GM12878 (cell line): ENCODE measurements at regions of chr5 and their contacts with region 1.

Region 1: DNA sequence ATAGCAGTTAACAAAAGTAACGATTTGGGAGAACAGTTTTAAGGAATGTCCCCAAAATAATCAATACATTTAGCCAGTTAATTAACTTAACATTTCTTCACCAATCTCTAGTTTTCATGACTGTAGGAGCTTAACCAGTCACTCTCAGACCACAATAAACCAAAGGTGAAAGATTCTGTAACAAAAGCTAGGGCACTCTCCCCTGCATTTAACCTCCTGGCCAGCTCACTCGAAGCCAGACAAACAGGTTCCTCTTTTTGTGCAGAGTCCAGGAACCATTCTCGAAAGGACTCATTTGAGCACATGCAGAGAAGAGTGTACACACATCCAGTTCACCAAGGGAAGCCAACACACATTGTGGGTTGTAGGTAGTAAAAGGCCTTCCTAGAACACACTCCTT is 6.5 kb downstream of the IL7R start:
- DNase-seq: no peak
- ATAC-seq: peak; percentile 87
- H3K4me3 ChIP-seq: no peak overlapping the region
- H3K27ac ChIP-seq: no peak overlapping the region
- H3K4me1 ChIP-seq: peaks cover 5% of the 10 kb centered on the region
- H3K27me3 ChIP-seq: no peaks in the 10 kb centered on the region
- CTCF ChIP-seq: no peak
- EP300 ChIP-seq: no peak
- POLR2A ChIP-seq: no peak
- RAD21 ChIP-seq: no peak

Region 2: DNA sequence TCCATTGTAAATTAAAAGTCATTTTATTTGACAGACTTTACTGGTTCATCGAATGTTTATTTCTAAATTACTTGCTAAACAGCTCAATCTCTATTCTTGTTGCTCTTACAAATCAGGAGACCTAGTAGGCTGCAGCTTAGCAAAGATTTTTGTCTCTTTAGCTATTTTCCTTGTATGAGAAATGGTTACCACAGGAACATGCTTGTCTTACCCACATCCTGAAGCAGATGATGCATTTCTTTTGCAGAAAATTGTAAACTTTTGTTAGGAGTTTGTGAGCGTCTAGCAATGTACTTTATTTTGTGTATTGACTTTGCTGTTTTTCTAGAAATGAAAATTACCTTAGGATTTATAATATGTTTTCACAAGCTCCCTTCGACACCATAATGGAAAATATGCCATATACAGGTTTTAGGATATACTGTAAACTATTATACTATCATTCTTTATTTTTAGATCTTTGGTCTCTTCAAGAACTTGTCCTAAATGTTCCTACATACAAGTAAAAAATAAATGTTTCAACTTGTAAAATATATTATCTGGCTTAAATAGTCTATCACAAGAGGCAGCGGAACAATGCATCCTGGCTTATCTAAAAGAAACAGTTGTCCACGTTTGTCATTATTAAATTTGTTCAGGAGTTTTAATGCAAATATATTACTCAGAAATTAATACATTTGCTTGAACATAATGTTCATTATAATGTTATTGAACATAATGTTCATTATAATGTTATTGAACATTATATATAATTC is 191.4 kb before region 1 on chr5:
- CTCF ChIA-PET with region 1: no interaction called
- POLR2A ChIA-PET with region 1: no interaction called
- RAD21 ChIA-PET with region 1: no interaction called
- SMC1A ChIA-PET with region 1: no interaction called
- in situ Hi-C with region 1: no loop called
- intact Hi-C with region 1: loop called (anchors 2 kb)
- DNase-seq: no peak
- ATAC-seq: no peak
- H3K4me3 ChIP-seq: no peak overlapping the region
- H3K27ac ChIP-seq: no peak overlapping the region
- H3K4me1 ChIP-seq: no peaks in the 10 kb centered on the region
- H3K27me3 ChIP-seq: no peaks in the 10 kb centered on the region
- CTCF ChIP-seq: no peak
- EP300 ChIP-seq: no peak
- POLR2A ChIP-seq: no peak
- RAD21 ChIP-seq: no peak

Region 3: DNA sequence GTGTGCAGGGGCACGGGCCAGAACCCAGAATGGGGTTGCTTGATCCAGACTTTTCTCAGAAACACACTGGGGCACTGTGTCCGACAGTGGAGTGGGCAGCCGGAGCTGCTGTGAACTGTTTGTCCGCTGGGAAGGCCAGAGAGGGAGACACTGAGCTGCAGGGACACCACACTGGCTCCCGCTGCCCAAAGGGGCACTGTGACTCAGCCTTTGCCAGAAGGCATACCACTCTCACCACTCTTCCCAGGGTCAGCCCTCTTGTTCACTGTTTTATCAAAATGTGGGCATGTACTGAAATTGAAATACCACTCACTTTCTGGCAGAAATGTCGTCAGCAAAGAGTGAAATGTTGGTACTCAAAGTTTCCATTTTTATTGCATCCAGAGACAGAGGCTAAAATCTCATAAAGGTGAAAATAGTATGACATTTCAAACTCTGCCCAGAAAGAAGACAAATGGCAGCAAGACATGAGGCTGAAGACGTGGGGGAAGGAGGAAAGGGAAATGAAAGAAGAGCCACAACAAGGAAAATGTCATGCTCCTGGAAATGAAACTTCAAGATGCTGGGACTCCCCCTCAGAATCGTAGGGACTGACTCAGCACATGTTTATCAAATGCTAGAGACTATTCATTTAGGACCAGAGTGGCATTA is 10.9 kb before region 1 on chr5:
- CTCF ChIA-PET with region 1: interaction called, 6 read pairs
- POLR2A ChIA-PET with region 1: interaction called, 6 read pairs
- RAD21 ChIA-PET with region 1: interaction called, 6 read pairs
- SMC1A ChIA-PET with region 1: interaction called, 14 read pairs
- in situ Hi-C with region 1: no loop called
- intact Hi-C with region 1: no loop called
- DNase-seq: peak; percentile 26
- ATAC-seq: peak; percentile 65
- H3K4me3 ChIP-seq: no peak overlapping the region
- H3K27ac ChIP-seq: no peak overlapping the region
- H3K4me1 ChIP-seq: peaks cover 18% of the 10 kb centered on the region
- H3K27me3 ChIP-seq: no peaks in the 10 kb centered on the region
- CTCF ChIP-seq: peak in 2 of 3 experiments; percentile 3 to 23; a peak in 1 of 6 replicates
- EP300 ChIP-seq: peak; percentile 31 to 41; a peak in 1 of 4 replicates
- POLR2A ChIP-seq: no peak
- RAD21 ChIP-seq: no peak

Region 4: GRCh38 chr5:35876921-35877320 is 13.8 kb after region 1 on chr5:
- CTCF ChIA-PET with region 1: interaction called, 12 read pairs
- POLR2A ChIA-PET with region 1: interaction called, 9 read pairs
- RAD21 ChIA-PET with region 1: interaction called, 6 read pairs
- SMC1A ChIA-PET with region 1: interaction called, 22 read pairs
- in situ Hi-C with region 1: no loop called
- intact Hi-C with region 1: no loop called
- DNase-seq: no peak
- ATAC-seq: peak; percentile 77
- H3K4me3 ChIP-seq: no peak overlapping the region
- H3K27ac ChIP-seq: no peak overlapping the region
- H3K4me1 ChIP-seq: peaks cover 11% of the 10 kb centered on the region
- H3K27me3 ChIP-seq: no peaks in the 10 kb centered on the region
- CTCF ChIP-seq: no peak
- EP300 ChIP-seq: no peak
- POLR2A ChIP-seq: no peak
- RAD21 ChIP-seq: no peak

Region 5: GRCh38 chr5:35884115-35884788 is 21.1 kb after region 1 on chr5:
- CTCF ChIA-PET with region 1: interaction called, 12 read pairs
- POLR2A ChIA-PET with region 1: interaction called, 9 read pairs
- RAD21 ChIA-PET with region 1: interaction called, 6 read pairs
- SMC1A ChIA-PET with region 1: interaction called, 22 read pairs
- in situ Hi-C with region 1: no loop called
- intact Hi-C with region 1: loop called (anchors 2 kb)
- DNase-seq: no peak
- ATAC-seq: peak; percentile 91
- H3K4me3 ChIP-seq: no peak overlapping the region
- H3K27ac ChIP-seq: no peak overlapping the region
- H3K4me1 ChIP-seq: peaks cover 3% of the 10 kb centered on the region; the same call in 1 of the 2 replicates
- H3K27me3 ChIP-seq: no peaks in the 10 kb centered on the region
- CTCF ChIP-seq: no peak
- EP300 ChIP-seq: 0 out of 4 replicates have a peak, but pooled peaks of 1 of the 2 experiments have one; percentile 45
- POLR2A ChIP-seq: no peak
- RAD21 ChIP-seq: no peak

Region 6: DNA sequence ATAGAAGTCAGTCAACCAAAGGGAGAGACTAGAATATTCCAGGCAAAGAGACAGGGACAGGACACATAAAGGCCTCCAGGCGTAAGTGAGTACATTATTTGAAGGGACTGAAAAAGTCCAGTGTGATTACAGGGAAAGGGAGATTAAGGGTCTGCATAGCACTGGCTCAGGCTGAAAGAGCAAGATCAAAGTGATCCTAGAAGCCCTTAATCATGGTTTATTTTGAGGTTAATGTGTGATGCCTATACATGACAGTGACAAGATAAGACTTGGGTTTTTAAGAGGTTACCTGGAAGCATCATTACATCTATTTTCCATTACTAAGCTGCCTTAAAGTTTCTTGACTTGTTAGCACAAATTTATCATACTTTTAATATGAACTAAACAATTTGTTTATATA is 262.7 kb after region 1 on chr5:
- CTCF ChIA-PET with region 1: no interaction called
- POLR2A ChIA-PET with region 1: no interaction called
- RAD21 ChIA-PET with region 1: no interaction called
- SMC1A ChIA-PET with region 1: no interaction called
- in situ Hi-C with region 1: no loop called
- intact Hi-C with region 1: no loop called
- DNase-seq: no peak
- ATAC-seq: no peak
- H3K4me3 ChIP-seq: no peak overlapping the region
- H3K27ac ChIP-seq: no peak overlapping the region
- H3K4me1 ChIP-seq: no peaks in the 10 kb centered on the region
- H3K27me3 ChIP-seq: no peaks in the 10 kb centered on the region
- CTCF ChIP-seq: no peak
- EP300 ChIP-seq: no peak
- POLR2A ChIP-seq: no peak
- RAD21 ChIP-seq: no peak